ENCODE measurements at regions of chr5 and their contacts with region 1.

Region 1: GRCh38 chr5:45750574-45750973 is 54.4 kb upstream of the HCN1 start:
- DNase-seq: no peak

Region 2: GRCh38 chr5:45793638-45794532 is 43.3 kb after region 1 on chr5:
- intact Hi-C with region 1: loop called in 1 of 2 experiments (anchors 2 kb)
- DNase-seq: no peak

Measured in posterior vena cava (tissue), 2 donors.